GM12878 (cell line): ENCODE measurements at regions of chr1 and their contacts with region 1.

Region 1: GRCh38 chr1:205658943-205659581 is 21.2 kb downstream of the SLC45A3 start:
- DNase-seq: no peak
- ATAC-seq: peak; percentile 95
- H3K4me3 ChIP-seq: no peak overlapping the region
- H3K27ac ChIP-seq: no peak overlapping the region
- H3K4me1 ChIP-seq: no peaks in the 10 kb centered on the region; the same call in 1 of the 2 replicates
- H3K27me3 ChIP-seq: no peaks in the 10 kb centered on the region
- CTCF ChIP-seq: peak; percentile 93 to 95 (median 94)
- EP300 ChIP-seq: no peak
- POLR2A ChIP-seq: no peak
- RAD21 ChIP-seq: peak; percentile 96

Region 2: DNA sequence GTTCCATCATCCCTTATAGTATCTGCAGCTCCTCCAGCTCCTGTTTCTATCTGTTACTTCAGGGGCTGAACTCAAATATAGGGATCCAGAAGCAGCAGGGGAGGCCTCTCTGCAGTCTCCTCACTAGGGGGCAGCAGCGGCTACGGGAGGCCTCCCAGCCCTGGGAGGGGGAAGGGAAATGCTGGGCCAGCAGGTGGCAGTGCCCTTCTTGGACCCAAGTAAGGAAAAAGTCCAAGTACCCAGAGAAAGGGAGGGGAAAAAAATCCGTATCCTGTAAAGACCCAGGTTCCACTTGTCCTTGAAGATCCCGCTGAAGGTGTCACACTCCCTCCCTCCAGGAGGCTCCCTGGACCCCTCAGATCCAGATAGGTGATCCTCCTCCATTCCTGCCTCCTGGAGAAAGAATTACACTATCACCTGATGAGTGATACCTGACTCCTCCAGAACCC is 323.4 kb before region 1 on chr1:
- CTCF ChIA-PET with region 1: interaction called, 3 read pairs
- POLR2A ChIA-PET with region 1: no interaction called
- RAD21 ChIA-PET with region 1: interaction called, 5 read pairs
- SMC1A ChIA-PET with region 1: interaction called, 3 read pairs
- in situ Hi-C with region 1: no loop called
- intact Hi-C with region 1: loop called (anchors 5 kb)
- DNase-seq: no peak
- ATAC-seq: peak; percentile 87
- H3K4me3 ChIP-seq: no peak overlapping the region
- H3K27ac ChIP-seq: no peak overlapping the region
- H3K4me1 ChIP-seq: peaks cover 6% of the 10 kb centered on the region; the same call in 1 of the 2 replicates
- H3K27me3 ChIP-seq: peaks cover 7 to 18% of the 10 kb centered on the region in 2 experiments
- CTCF ChIP-seq: peak; percentile 98 to 99 (median 99); a peak in 5 of 6 replicates
- EP300 ChIP-seq: no peak
- POLR2A ChIP-seq: no peak
- RAD21 ChIP-seq: peak; percentile 69

Region 3: GRCh38 chr1:205374228-205375078 is 284.6 kb before region 1 on chr1:
- CTCF ChIA-PET with region 1: no interaction called
- POLR2A ChIA-PET with region 1: no interaction called
- RAD21 ChIA-PET with region 1: no interaction called
- SMC1A ChIA-PET with region 1: no interaction called
- in situ Hi-C with region 1: no loop called
- intact Hi-C with region 1: no loop called
- DNase-seq: no peak
- ATAC-seq: no peak
- H3K4me3 ChIP-seq: no peak overlapping the region
- H3K27ac ChIP-seq: no peak overlapping the region
- H3K4me1 ChIP-seq: no peaks in the 10 kb centered on the region
- H3K27me3 ChIP-seq: peaks cover 5% of the 10 kb centered on the region in 2 experiments; a peak in 3 of 4 replicates
- CTCF ChIP-seq: no peak
- EP300 ChIP-seq: no peak
- POLR2A ChIP-seq: no peak
- RAD21 ChIP-seq: no peak

Region 4: DNA sequence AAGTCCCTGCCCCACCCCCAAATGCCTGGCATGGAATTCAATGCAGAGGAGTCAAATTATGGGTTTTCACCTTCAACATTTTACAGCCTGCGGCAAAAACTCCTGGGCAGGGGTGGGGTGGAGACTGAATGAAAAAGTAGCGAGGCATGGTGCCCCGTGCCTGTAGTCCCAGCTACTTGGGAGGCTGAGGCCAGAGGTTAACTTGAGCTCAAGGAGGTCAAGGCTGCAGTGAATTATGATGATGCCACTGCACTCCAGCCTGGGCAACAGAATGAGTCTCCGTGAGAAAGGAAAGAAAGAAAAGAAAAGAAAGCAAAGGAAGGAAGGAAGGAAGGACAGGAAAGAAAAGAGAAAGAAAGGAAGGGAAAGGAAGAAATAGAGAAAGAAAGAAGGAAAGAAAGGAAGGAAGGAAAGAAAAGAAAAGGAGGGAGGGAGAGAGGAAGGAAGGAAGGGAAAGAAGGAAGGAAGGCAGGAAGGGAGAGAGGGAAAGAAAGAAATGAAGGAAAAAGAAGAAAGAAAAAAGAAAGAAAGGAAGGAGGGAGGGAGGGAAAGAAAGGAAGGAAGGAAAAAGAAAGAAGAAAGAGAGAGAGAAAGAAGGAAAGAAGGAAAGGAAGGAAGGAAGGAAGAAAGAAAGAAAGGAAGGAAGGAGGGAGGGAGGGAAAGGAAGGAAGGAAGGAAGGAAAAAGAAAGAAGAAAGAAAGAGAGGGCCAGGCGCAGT is 248.3 kb before region 1 on chr1:
- CTCF ChIA-PET with region 1: no interaction called
- POLR2A ChIA-PET with region 1: no interaction called
- RAD21 ChIA-PET with region 1: no interaction called
- SMC1A ChIA-PET with region 1: no interaction called
- in situ Hi-C with region 1: no loop called
- intact Hi-C with region 1: no loop called
- DNase-seq: no peak
- ATAC-seq: no peak
- H3K4me3 ChIP-seq: no peak overlapping the region
- H3K27ac ChIP-seq: no peak overlapping the region
- H3K4me1 ChIP-seq: no peaks in the 10 kb centered on the region
- H3K27me3 ChIP-seq: peaks cover 0 to 5% of the 10 kb centered on the region in 2 experiments; a peak in 3 of 4 replicates
- CTCF ChIP-seq: no peak
- EP300 ChIP-seq: no peak
- POLR2A ChIP-seq: no peak
- RAD21 ChIP-seq: no peak

Region 5: GRCh38 chr1:205582471-205583291 is 76.4 kb before region 1 on chr1:
- CTCF ChIA-PET with region 1: interaction called, 575 read pairs
- POLR2A ChIA-PET with region 1: no interaction called
- RAD21 ChIA-PET with region 1: interaction called, 452 read pairs
- SMC1A ChIA-PET with region 1: interaction called, 415 read pairs
- in situ Hi-C with region 1: no loop called
- intact Hi-C with region 1: no loop called
- DNase-seq: no peak
- ATAC-seq: peak; percentile 74
- H3K4me3 ChIP-seq: no peak overlapping the region
- H3K27ac ChIP-seq: no peak overlapping the region
- H3K4me1 ChIP-seq: peaks cover 10% of the 10 kb centered on the region
- H3K27me3 ChIP-seq: peaks cover 0 to 5% of the 10 kb centered on the region in 2 experiments; a peak in 2 of 4 replicates
- CTCF ChIP-seq: no peak
- EP300 ChIP-seq: no peak
- POLR2A ChIP-seq: no peak
- RAD21 ChIP-seq: no peak

Region 6: GRCh38 chr1:205680073-205680851 is 21.2 kb after region 1 on chr1 and contains the start of gene SLC45A3:
- CTCF ChIA-PET with region 1: interaction called, 183 read pairs
- POLR2A ChIA-PET with region 1: interaction called, 4 read pairs
- RAD21 ChIA-PET with region 1: interaction called, 23 read pairs
- SMC1A ChIA-PET with region 1: interaction called, 62 read pairs
- in situ Hi-C with region 1: no loop called
- intact Hi-C with region 1: no loop called
- DNase-seq: no peak
- ATAC-seq: peak; percentile 85
- H3K4me3 ChIP-seq: peak within 1 kb of the TSS; percentile 77
- H3K27ac ChIP-seq: no peak within 1 kb of the TSS
- H3K4me1 ChIP-seq: peaks cover 9% of the 10 kb centered on the region
- H3K27me3 ChIP-seq: peaks cover 0 to 4% of the 10 kb centered on the region in 2 experiments; a peak in 1 of 4 replicates
- CTCF ChIP-seq: no peak
- EP300 ChIP-seq: no peak
- POLR2A ChIP-seq: no peak
- RAD21 ChIP-seq: no peak
- polyA plus RNA-seq, gene SLC45A3: 0.26 to 0.60 TPM

Region 7: GRCh38 chr1:205739348-205740160 is 80.5 kb after region 1 on chr1:
- CTCF ChIA-PET with region 1: interaction called, 61 read pairs
- POLR2A ChIA-PET with region 1: no interaction called
- RAD21 ChIA-PET with region 1: interaction called, 14 read pairs
- SMC1A ChIA-PET with region 1: interaction called, 18 read pairs
- in situ Hi-C with region 1: no loop called
- intact Hi-C with region 1: no loop called
- DNase-seq: no peak
- ATAC-seq: no peak
- H3K4me3 ChIP-seq: no peak overlapping the region
- H3K27ac ChIP-seq: no peak overlapping the region
- H3K4me1 ChIP-seq: peaks cover 5% of the 10 kb centered on the region
- H3K27me3 ChIP-seq: no peaks in the 10 kb centered on the region
- CTCF ChIP-seq: no peak
- EP300 ChIP-seq: no peak
- POLR2A ChIP-seq: no peak
- RAD21 ChIP-seq: no peak

Region 8: DNA sequence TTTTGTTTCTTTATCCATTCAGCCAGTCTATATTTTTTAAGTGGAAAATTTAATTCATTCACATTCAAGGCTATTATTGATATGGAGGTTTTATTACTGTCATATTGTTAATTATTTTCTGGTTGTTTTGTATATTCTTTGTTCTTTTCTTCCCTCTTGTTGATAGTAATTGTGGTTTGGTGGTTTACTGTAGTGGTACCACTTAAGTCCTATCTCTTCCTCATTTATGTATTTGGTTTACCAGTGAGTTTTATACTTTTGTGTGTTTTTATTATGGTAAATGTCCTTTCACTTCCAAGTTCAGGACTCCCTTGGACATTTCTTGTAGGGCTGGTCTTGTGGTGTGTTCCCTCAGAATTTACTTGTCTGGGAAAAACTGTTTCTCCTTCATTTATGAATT is 219.0 kb after region 1 on chr1:
- CTCF ChIA-PET with region 1: no interaction called
- POLR2A ChIA-PET with region 1: no interaction called
- RAD21 ChIA-PET with region 1: no interaction called
- SMC1A ChIA-PET with region 1: no interaction called
- in situ Hi-C with region 1: no loop called
- intact Hi-C with region 1: no loop called
- DNase-seq: no peak
- ATAC-seq: no peak
- H3K4me3 ChIP-seq: no peak overlapping the region
- H3K27ac ChIP-seq: no peak overlapping the region
- H3K4me1 ChIP-seq: no peaks in the 10 kb centered on the region
- H3K27me3 ChIP-seq: no peaks in the 10 kb centered on the region
- CTCF ChIP-seq: no peak
- EP300 ChIP-seq: no peak
- POLR2A ChIP-seq: no peak
- RAD21 ChIP-seq: no peak

Region 9: DNA sequence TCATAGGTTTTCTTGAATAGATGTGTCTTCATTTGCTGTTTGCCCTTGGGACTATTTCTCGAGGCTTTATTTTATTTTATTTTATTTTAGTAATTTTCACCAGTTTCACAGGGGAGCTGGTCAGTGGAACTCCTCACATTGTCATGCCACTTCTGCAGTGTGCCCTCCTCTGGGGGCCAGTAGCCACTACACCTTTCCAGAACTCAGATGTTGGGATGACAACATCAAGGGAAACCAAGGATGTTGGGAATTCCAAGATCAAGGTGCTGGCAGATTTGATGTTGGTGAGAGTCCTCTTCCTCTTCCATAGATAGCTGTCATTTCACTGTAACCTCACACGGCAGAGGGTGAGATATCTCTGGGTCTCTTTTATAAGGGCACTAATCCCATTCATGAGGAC is 248.7 kb after region 1 on chr1:
- CTCF ChIA-PET with region 1: interaction called, 21 read pairs
- POLR2A ChIA-PET with region 1: no interaction called
- RAD21 ChIA-PET with region 1: interaction called, 10 read pairs
- SMC1A ChIA-PET with region 1: interaction called, 9 read pairs
- in situ Hi-C with region 1: no loop called
- intact Hi-C with region 1: no loop called
- DNase-seq: no peak
- ATAC-seq: no peak
- H3K4me3 ChIP-seq: no peak overlapping the region
- H3K27ac ChIP-seq: no peak overlapping the region
- H3K4me1 ChIP-seq: no peaks in the 10 kb centered on the region
- H3K27me3 ChIP-seq: no peaks in the 10 kb centered on the region
- CTCF ChIP-seq: peak; percentile 31 to 60 (median 39); a peak in 5 of 6 replicates
- EP300 ChIP-seq: no peak
- POLR2A ChIP-seq: no peak
- RAD21 ChIP-seq: peak; percentile 20; the same call in 1 of the 2 replicates